ENCODE measurements at regions of chr12 and their contacts with region 1.

Region 1: DNA sequence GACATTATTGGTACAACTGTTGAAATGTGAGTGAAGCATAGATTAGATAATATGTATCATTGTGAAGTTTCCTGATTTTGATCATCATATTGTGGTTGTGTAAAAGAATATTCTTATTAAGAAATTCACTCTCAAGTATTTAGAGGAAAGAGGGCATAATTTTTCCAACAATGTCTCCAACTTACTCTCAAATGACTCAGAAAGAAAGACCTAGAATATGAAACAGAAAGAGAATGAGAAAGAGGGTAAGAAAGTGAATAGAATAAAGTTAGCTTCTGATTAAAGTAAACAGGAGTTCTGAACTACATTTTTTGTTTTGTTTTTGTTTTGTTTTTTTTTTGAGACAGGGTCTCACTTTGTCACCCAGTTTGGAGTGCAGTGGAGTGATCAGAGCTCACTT is 123.0 kb downstream of the CPNE8 start:
- DNase-seq: no peak
- H3K4me3 ChIP-seq: no peak overlapping the region
- H3K27ac ChIP-seq: no peak overlapping the region
- H3K4me1 ChIP-seq: no peaks in the 10 kb centered on the region
- H3K27me3 ChIP-seq: no peaks in the 10 kb centered on the region
- CTCF ChIP-seq: no peak

Region 2: GRCh38 chr12:38445040-38445439 is 337.3 kb before region 1 on chr12:
- CTCF ChIA-PET with region 1: no interaction called
- POLR2A ChIA-PET with region 1: no interaction called
- intact Hi-C with region 1: no loop called
- DNase-seq: no peak
- H3K4me3 ChIP-seq: no peak overlapping the region
- H3K27ac ChIP-seq: no peak overlapping the region
- H3K4me1 ChIP-seq: no peaks in the 10 kb centered on the region
- H3K27me3 ChIP-seq: no peaks in the 10 kb centered on the region
- CTCF ChIP-seq: no peak

Region 3: DNA sequence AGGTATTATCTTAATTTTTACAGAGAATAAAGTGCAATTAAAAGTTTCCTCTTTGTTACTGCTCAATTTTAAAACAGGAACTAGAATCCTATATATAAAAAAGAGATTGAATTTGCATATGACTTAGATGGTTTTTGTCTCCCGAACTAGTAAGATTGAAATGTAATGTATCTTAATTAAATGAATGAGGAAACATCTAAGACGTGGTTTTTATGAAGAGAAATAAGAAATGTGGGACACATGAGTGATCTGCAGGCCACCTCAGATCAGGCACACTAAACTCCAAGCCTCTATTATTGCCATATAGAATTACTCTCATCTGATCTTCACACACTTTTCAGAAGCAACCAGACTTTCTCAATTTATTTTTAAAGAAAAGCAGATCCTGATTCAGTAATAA is 35.6 kb before region 1 on chr12:
- CTCF ChIA-PET with region 1: no interaction called
- POLR2A ChIA-PET with region 1: no interaction called
- intact Hi-C with region 1: loop called (anchors 1 kb)
- DNase-seq: no peak
- H3K4me3 ChIP-seq: no peak overlapping the region
- H3K27ac ChIP-seq: no peak overlapping the region
- H3K4me1 ChIP-seq: no peaks in the 10 kb centered on the region
- H3K27me3 ChIP-seq: no peaks in the 10 kb centered on the region
- CTCF ChIP-seq: no peak

Measured in A673 (cell line).